ENCODE measurements at regions of chr1 and their contacts with region 1.

Region 1: GRCh38 chr1:160193091-160193819 is 2.9 kb downstream of the CASQ1 start:
- DNase-seq: peak; percentile 68 to 78
- ATAC-seq: peak; percentile 75 to 89
- H3K4me3 ChIP-seq: no peak overlapping the region
- H3K27ac ChIP-seq: peak overlapping the region; percentile 43 to 61; a peak in 5 of 6 replicates
- H3K4me1 ChIP-seq: peaks cover 18% of the 10 kb centered on the region
- CTCF ChIP-seq: peak; percentile 92
- EP300 ChIP-seq: no peak
- POLR2A ChIP-seq: no peak
- RAD21 ChIP-seq: peak; percentile 92 to 95

Region 2: DNA sequence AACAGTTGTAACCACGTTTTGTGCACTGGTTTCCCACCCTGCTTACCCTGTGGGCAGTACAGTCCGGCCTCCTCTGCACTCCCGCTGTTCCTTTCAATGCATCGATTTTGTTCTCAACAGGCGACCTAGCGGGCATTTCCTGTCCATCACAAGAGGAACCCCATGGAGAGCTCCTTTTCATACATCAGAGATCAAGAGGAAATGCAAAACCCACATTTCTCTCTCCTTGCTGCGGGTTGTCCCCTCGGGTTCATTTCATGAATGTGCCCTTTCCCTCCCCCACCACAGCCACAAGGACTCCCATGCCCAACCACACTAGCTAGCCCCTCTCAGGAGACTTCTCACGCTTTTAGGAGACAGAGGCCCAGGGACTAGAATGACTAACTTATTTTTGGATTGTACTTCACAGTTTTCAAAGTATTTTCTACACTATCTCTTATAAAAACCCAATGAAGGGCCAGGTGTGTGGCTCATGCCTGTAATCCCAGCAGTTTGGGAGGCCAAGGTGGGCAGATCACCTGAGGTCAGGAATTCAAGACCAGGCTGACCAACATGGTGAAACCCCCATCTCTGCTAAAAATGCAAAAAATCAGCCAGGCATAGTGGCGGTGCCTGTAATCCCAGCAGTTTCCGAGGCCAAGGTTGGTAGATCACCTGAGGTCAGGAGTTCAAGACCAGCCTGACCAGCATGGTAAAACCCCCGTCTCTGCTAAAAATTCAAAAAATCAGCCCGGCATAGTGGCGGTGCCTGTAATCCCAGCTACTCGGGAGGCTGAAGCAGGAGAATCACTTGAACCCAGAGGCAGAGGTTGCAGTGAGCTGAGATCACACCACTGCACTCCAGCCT is 23.5 kb before region 1 on chr1:
- CTCF ChIA-PET with region 1: interaction called, 26 read pairs
- POLR2A ChIA-PET with region 1: no interaction called
- DNase-seq: no peak
- ATAC-seq: no peak
- H3K4me3 ChIP-seq: no peak overlapping the region
- H3K27ac ChIP-seq: no peak overlapping the region
- H3K4me1 ChIP-seq: no peaks in the 10 kb centered on the region
- CTCF ChIP-seq: no peak
- EP300 ChIP-seq: no peak
- POLR2A ChIP-seq: no peak
- RAD21 ChIP-seq: no peak

Region 3: GRCh38 chr1:160211046-160211790 is 18.0 kb after region 1 on chr1:
- CTCF ChIA-PET with region 1: interaction called, 86 read pairs
- POLR2A ChIA-PET with region 1: interaction called, 3 read pairs
- DNase-seq: no peak
- ATAC-seq: no peak
- H3K4me3 ChIP-seq: no peak overlapping the region
- H3K27ac ChIP-seq: no peak overlapping the region
- H3K4me1 ChIP-seq: peaks cover 32% of the 10 kb centered on the region
- CTCF ChIP-seq: no peak
- EP300 ChIP-seq: no peak
- POLR2A ChIP-seq: no peak
- RAD21 ChIP-seq: no peak

Region 4: GRCh38 chr1:160232911-160233310 is 39.7 kb after region 1 on chr1:
- CTCF ChIA-PET with region 1: interaction called, 20 read pairs
- POLR2A ChIA-PET with region 1: no interaction called
- DNase-seq: no peak
- ATAC-seq: no peak
- H3K4me3 ChIP-seq: no peak overlapping the region
- H3K27ac ChIP-seq: no peak overlapping the region
- H3K4me1 ChIP-seq: no peaks in the 10 kb centered on the region
- CTCF ChIP-seq: no peak
- EP300 ChIP-seq: no peak
- POLR2A ChIP-seq: no peak
- RAD21 ChIP-seq: no peak

Region 5: GRCh38 chr1:160251687-160252526 is 58.7 kb after region 1 on chr1:
- CTCF ChIA-PET with region 1: interaction called, 69 read pairs
- POLR2A ChIA-PET with region 1: no interaction called
- DNase-seq: peak; percentile 70 to 73
- ATAC-seq: peak; percentile 98 to 99
- H3K4me3 ChIP-seq: no peak overlapping the region
- H3K27ac ChIP-seq: no peak overlapping the region
- H3K4me1 ChIP-seq: peaks cover 16% of the 10 kb centered on the region
- CTCF ChIP-seq: peak; percentile 77
- EP300 ChIP-seq: no peak
- POLR2A ChIP-seq: no peak
- RAD21 ChIP-seq: peak; percentile 83 to 85

Region 6: DNA sequence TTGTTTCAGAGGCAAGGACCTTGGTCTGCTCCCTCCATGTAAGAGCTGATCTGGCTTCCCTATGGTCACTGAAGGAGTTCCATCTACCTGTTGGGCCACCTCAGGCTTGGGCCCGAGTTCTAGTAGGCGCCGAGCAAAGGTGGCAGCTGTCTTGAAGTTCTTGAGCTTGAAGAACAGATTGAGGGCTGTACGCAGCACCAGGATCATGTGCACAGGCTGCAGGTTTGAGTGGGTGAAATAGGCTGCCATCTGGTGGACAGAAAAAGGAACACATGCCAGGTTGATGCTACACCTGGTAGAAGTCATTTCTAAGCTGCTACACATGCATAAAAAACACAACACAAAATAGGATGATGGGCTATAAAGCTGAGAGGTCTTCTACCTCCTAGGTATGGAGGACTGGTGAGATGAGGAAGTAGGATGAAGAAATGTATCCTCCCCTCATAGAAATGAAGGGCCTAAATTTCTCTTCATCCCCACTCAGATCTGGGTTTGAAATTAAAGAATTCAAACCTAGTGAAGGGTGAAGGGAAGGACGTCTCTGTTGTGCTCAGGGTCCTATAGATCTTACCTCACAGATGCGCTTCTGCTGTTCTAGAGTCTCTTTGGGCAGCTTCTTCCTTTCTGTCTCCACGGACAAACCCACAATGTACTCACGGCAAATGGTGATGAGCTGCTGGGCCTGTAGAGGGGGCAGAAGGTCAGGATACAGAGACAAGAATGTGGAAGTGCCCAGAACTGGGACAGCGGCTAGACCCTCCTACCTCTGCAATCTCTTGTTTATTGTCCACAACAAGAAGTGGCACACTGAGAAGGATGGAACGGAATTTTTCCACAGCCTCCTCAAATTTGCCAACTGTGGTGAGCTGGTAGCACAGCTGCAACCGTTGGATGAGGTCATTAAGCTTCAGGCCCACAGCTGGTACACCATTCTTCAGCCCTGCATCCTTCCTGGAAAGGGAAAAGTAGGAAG is 98.3 kb after region 1 on chr1:
- CTCF ChIA-PET with region 1: interaction called, 81 read pairs
- POLR2A ChIA-PET with region 1: no interaction called
- DNase-seq: peak; percentile 62 to 76
- ATAC-seq: peak; percentile 92 to 95
- H3K4me3 ChIP-seq: no peak overlapping the region
- H3K27ac ChIP-seq: no peak overlapping the region
- H3K4me1 ChIP-seq: no peaks in the 10 kb centered on the region
- CTCF ChIP-seq: peak; percentile 84
- EP300 ChIP-seq: no peak
- POLR2A ChIP-seq: no peak
- RAD21 ChIP-seq: peak; percentile 51 to 56

Region 7: GRCh38 chr1:160558660-160559380 is 365.6 kb after region 1 on chr1:
- CTCF ChIA-PET with region 1: no interaction called
- POLR2A ChIA-PET with region 1: no interaction called
- DNase-seq: no peak
- ATAC-seq: no peak
- H3K4me3 ChIP-seq: no peak overlapping the region
- H3K27ac ChIP-seq: no peak overlapping the region
- H3K4me1 ChIP-seq: no peaks in the 10 kb centered on the region
- CTCF ChIP-seq: no peak
- EP300 ChIP-seq: no peak
- POLR2A ChIP-seq: no peak
- RAD21 ChIP-seq: no peak

Measured in A549 (cell line).